Calu3 (cell line): ENCODE measurements at regions of chr6 and their contacts with region 1.

Region 1: GRCh38 chr6:109644131-109644530 is 46.9 kb downstream of the AK9 start:
- DNase-seq: no peak
- H3K4me3 Mint-ChIP-seq: no peak overlapping the region
- H3K27ac Mint-ChIP-seq: no peak overlapping the region
- H3K4me1 Mint-ChIP-seq: no peaks in the 10 kb centered on the region
- H3K27me3 Mint-ChIP-seq: no peaks in the 10 kb centered on the region
- CTCF ChIP-seq: no peak

Region 2: DNA sequence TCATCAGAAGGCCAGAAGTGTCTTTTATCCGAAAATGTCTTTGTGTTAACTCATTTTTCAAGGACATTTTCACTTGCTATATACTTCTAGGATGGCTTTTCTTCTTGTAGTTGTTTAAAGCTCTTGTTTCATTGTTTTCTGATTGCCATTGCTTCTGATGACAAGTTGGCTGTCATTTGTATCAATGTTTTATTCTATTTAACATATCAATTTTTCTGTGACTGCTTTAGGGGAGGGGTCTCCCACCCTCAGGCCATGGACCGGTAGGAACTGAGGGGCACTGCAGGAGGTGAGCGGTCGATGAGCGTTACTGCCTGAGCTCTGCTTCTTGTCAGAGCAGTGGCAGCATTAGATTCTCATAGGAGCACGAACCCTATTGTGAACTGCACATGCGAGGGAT is 18.9 kb before region 1 on chr6:
- CTCF ChIA-PET with region 1: no interaction called
- intact Hi-C with region 1: loop called (anchors 1 kb)
- DNase-seq: no peak
- H3K4me3 Mint-ChIP-seq: no peak overlapping the region
- H3K27ac Mint-ChIP-seq: no peak overlapping the region
- H3K4me1 Mint-ChIP-seq: no peaks in the 10 kb centered on the region
- H3K27me3 Mint-ChIP-seq: no peaks in the 10 kb centered on the region
- CTCF ChIP-seq: no peak

Region 3: GRCh38 chr6:109840034-109840433 is 195.9 kb after region 1 on chr6:
- CTCF ChIA-PET with region 1: no interaction called
- intact Hi-C with region 1: no loop called
- DNase-seq: no peak
- H3K4me3 Mint-ChIP-seq: no peak overlapping the region
- H3K27ac Mint-ChIP-seq: no peak overlapping the region
- H3K4me1 Mint-ChIP-seq: no peaks in the 10 kb centered on the region
- H3K27me3 Mint-ChIP-seq: no peaks in the 10 kb centered on the region
- CTCF ChIP-seq: no peak

Region 4: GRCh38 chr6:110270165-110270564 is 626.0 kb after region 1 on chr6:
- CTCF ChIA-PET with region 1: no interaction called
- intact Hi-C with region 1: no loop called
- DNase-seq: no peak
- H3K4me3 Mint-ChIP-seq: no peak overlapping the region
- H3K27ac Mint-ChIP-seq: no peak overlapping the region
- H3K4me1 Mint-ChIP-seq: no peaks in the 10 kb centered on the region
- H3K27me3 Mint-ChIP-seq: peaks cover 39% of the 10 kb centered on the region
- CTCF ChIP-seq: no peak